CD4-positive, alpha-beta memory T cell (primary cell): ENCODE measurements at regions of chr11 and their contacts with region 1.

Region 1: GRCh38 chr11:6603287-6604080 is at the starts of genes ILK and RRP8:
- DNase-seq: peak; percentile 82 to 86 (median 85)
- H3K4me3 ChIP-seq: peak within 1 kb of the TSS; percentile 94 to 96
- H3K4me3 Mint-ChIP-seq: no peak within 1 kb of the TSS
- H3K27ac ChIP-seq: peak within 1 kb of the TSS; percentile 85
- H3K27ac Mint-ChIP-seq: no peak within 1 kb of the TSS
- H3K4me1 ChIP-seq: peaks cover 62% of the 10 kb centered on the region
- H3K4me1 Mint-ChIP-seq: peaks cover 10 to 34% (median 20%) of the 10 kb centered on the region in 4 donors
- H3K27me3 ChIP-seq: no peaks in the 10 kb centered on the region
- H3K27me3 Mint-ChIP-seq: no peaks in the 10 kb centered on the region
- total RNA-seq, gene ILK: 131 to 132 TPM
- total RNA-seq, gene RRP8: 29.9 to 36.0 TPM

Region 2: DNA sequence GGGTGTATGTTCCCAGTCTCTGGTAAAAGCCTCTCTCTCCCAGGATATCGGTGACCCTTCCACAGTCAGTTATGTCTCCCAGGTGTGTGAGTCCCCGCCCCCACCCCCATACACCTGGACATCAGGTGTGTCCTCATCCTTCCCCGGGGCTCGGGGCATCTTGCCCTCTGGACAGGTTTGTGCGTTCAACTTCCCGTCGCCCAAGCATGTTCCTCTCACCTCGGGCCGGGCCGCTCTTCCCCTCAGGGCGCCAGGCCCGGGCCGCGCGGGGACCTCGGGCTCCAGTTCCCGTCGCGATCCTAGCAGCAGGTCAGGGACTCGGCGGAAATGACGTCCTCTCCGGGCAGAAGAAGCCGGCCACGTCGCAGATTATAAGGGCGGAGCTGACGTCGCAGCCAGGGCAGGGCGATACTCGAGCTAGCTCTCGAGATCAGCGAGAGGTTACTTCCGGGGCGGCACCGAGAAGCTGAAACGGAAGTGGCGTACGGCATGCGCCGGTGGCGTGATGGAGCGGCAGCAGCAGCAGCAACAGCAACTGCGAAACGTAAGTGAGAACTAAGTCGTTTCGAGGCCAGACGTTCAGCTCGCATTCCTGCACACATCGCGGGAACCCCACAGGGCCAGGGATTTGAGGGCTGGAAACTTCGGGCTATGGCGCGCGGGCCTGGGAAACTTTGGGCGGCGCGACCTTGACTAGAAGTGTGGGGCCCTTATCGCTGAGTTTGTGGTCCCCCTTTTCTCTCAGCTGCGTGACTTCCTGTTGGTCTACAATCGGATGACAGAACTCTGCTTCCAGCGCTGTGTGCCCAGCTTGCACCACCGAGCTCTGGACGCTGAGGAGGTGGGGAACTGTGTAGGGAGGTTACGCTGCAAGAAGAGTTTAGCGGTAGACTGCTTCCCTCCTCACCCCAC is 122.2 kb before region 1 on chr11 and contains the starts of genes ARFIP2 and TIMM10B:
- CTCF ChIA-PET with region 1: interaction called, 4 read pairs
- POLR2A ChIA-PET with region 1: interaction called, 3 read pairs
- intact Hi-C with region 1: loop called (anchors 1 kb)
- DNase-seq: peak; percentile 93 to 98 (median 95)
- H3K4me3 ChIP-seq: peak within 1 kb of the TSS; percentile 83 to 97
- H3K4me3 Mint-ChIP-seq: peak within 1 kb of the TSS; percentile 93 to 98 (median 96)
- H3K27ac ChIP-seq: peak within 1 kb of the TSS; percentile 90
- H3K27ac Mint-ChIP-seq: peak within 1 kb of the TSS; percentile 95 to 99 (median 98)
- H3K4me1 ChIP-seq: peaks cover 46% of the 10 kb centered on the region
- H3K4me1 Mint-ChIP-seq: peaks cover 26 to 44% (median 36%) of the 10 kb centered on the region in 4 donors
- H3K27me3 ChIP-seq: no peaks in the 10 kb centered on the region
- H3K27me3 Mint-ChIP-seq: no peaks in the 10 kb centered on the region
- total RNA-seq, gene ARFIP2: 53.9 to 56.9 TPM
- total RNA-seq, gene TIMM10B: 54.7 to 60.3 TPM

Region 3: GRCh38 chr11:6498121-6498520 is 105.4 kb before region 1 on chr11:
- CTCF ChIA-PET with region 1: no interaction called
- POLR2A ChIA-PET with region 1: no interaction called
- intact Hi-C with region 1: no loop called
- DNase-seq: no peak
- H3K4me3 ChIP-seq: no peak overlapping the region
- H3K4me3 Mint-ChIP-seq: no peak overlapping the region
- H3K27ac ChIP-seq: no peak overlapping the region
- H3K27ac Mint-ChIP-seq: no peak overlapping the region
- H3K4me1 ChIP-seq: no peaks in the 10 kb centered on the region
- H3K4me1 Mint-ChIP-seq: peaks cover 0 to 3% (median under 1%) of the 10 kb centered on the region in 4 donors
- H3K27me3 ChIP-seq: no peaks in the 10 kb centered on the region
- H3K27me3 Mint-ChIP-seq: no peaks in the 10 kb centered on the region

Region 4: DNA sequence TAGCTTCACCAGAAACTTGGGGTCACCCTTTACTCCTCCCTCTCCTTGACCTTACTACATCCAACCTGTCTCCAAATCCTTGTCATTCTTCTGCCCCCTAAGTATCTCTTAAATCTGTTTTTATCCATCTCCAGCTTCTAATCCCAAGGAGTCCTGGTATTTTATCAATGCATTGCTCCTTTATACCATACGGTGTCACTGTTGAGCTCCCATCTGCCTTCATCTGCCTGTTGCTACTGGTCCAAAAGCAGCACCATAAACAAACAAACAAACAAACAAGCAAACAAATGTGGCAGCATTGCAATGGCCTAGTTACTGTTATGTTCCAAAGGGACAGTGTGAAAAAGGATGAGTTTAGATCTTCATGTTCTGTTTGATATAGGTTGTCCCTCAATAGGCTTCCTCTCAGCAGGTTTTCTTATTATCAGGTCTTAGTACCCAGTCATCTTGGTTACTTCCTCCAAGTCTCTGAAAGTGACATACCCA is 72.2 kb before region 1 on chr11:
- CTCF ChIA-PET with region 1: interaction called, 8 read pairs
- POLR2A ChIA-PET with region 1: no interaction called
- intact Hi-C with region 1: loop called (anchors 5 kb)
- DNase-seq: peak; percentile 46 to 54 (median 50)
- H3K4me3 ChIP-seq: no peak overlapping the region
- H3K4me3 Mint-ChIP-seq: no peak overlapping the region
- H3K27ac ChIP-seq: no peak overlapping the region
- H3K27ac Mint-ChIP-seq: no peak overlapping the region
- H3K4me1 ChIP-seq: peaks cover 7% of the 10 kb centered on the region
- H3K4me1 Mint-ChIP-seq: peaks cover 6 to 14% (median 8%) of the 10 kb centered on the region in 4 donors
- H3K27me3 ChIP-seq: no peaks in the 10 kb centered on the region
- H3K27me3 Mint-ChIP-seq: no peaks in the 10 kb centered on the region

Region 5: GRCh38 chr11:6586434-6587359 is 16.8 kb before region 1 on chr11:
- CTCF ChIA-PET with region 1: no interaction called
- POLR2A ChIA-PET with region 1: no interaction called
- intact Hi-C with region 1: no loop called
- DNase-seq: no peak
- H3K4me3 ChIP-seq: no peak overlapping the region
- H3K4me3 Mint-ChIP-seq: no peak overlapping the region
- H3K27ac ChIP-seq: no peak overlapping the region
- H3K27ac Mint-ChIP-seq: no peak overlapping the region
- H3K4me1 ChIP-seq: no peaks in the 10 kb centered on the region
- H3K4me1 Mint-ChIP-seq: peaks cover 0 to 2% (median 0%) of the 10 kb centered on the region in 4 donors
- H3K27me3 ChIP-seq: no peaks in the 10 kb centered on the region
- H3K27me3 Mint-ChIP-seq: no peaks in the 10 kb centered on the region

Region 6: DNA sequence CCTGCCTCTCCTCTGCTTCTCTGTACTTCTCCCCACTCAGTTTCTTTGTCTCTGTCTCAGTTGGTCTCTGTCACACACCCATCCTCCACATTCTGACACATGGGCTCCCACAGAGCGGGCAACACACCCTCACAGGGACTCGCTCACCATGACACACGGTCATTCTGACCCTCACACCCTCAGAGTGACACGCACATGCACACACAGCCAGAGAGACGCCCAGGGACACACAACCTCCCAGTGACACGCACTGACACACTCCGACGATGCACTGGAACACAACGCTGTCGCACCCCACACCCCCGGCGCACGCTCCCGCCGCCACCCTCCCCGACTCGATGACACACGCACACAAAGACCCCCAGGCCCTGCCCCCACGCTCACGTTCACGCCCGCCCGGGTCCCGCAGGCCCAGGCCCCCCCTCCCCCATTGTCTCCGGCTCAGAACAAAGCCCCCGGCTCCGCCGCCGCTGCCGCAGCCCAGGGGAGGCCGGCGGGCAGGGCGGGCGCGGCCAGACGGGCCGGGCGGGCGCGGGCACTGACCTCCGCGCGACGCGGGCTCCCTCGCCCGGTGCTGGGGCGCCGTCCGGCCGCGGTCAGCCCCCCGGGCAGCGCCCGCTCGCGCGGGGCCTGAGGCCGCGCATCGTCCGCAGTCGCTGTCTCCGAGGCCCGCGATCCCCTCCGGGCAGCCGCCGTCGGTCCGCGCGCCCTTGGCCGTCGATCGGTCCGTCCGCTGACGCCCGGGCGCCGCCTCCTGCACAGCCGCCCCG is 51.7 kb after region 1 on chr11:
- CTCF ChIA-PET with region 1: interaction called, 9 read pairs
- POLR2A ChIA-PET with region 1: interaction called, 10 read pairs
- intact Hi-C with region 1: no loop called
- DNase-seq: peak in 1 of 5 donors; percentile 50
- H3K4me3 ChIP-seq: peak overlapping the region in 1 of 2 donors; percentile 3
- H3K4me3 Mint-ChIP-seq: no peak overlapping the region
- H3K27ac ChIP-seq: no peak overlapping the region
- H3K27ac Mint-ChIP-seq: no peak overlapping the region
- H3K4me1 ChIP-seq: peaks cover 25% of the 10 kb centered on the region
- H3K4me1 Mint-ChIP-seq: peaks cover 0 to 8% (median 1%) of the 10 kb centered on the region in 4 donors
- H3K27me3 ChIP-seq: peaks cover 7% of the 10 kb centered on the region
- H3K27me3 Mint-ChIP-seq: peaks cover 0 to 2% of the 10 kb centered on the region in 2 donors

Region 7: DNA sequence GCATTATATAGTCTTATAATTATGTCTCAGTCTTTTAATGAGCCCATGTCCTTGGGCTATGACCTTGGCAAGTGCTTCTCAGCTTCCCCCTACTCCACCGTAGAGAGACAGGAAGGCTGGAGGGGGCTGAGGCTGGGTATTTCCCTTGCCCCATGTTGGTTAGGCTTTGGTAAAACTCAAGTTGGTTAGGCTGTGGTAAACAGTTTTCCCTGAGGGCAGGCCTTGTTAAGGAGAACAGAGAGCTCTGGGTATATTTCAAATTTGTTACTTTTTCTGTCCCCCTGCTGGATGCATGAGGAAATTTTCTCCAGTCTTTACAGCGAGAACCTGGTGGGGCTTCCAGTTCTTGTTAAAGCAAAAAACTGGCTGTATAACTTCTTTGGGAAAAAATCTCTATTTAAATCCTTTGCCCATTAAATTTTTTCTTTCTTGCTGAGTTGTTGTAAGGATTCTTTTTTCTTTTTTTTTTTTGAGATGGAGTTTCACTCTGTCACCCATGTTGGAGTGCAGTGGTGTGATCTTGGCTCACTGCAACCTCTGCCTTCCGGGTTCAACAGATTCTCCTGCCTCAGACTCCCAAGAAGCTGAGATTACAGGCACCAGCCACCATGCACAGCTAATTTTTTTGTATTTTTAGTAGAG is 64.4 kb after region 1 on chr11:
- CTCF ChIA-PET with region 1: interaction called, 35 read pairs
- POLR2A ChIA-PET with region 1: interaction called, 21 read pairs
- intact Hi-C with region 1: loop called (anchors 1 kb)
- DNase-seq: peak; percentile 48 to 78 (median 54)
- H3K4me3 ChIP-seq: no peak overlapping the region
- H3K4me3 Mint-ChIP-seq: peak overlapping the region in 7 of 8 donors; percentile 5 to 35 (median 16)
- H3K27ac ChIP-seq: no peak overlapping the region
- H3K27ac Mint-ChIP-seq: peak overlapping the region; percentile 11 to 88 (median 74)
- H3K4me1 ChIP-seq: peaks cover 59% of the 10 kb centered on the region
- H3K4me1 Mint-ChIP-seq: peaks cover 45 to 87% (median 54%) of the 10 kb centered on the region in 4 donors
- H3K27me3 ChIP-seq: no peaks in the 10 kb centered on the region
- H3K27me3 Mint-ChIP-seq: no peaks in the 10 kb centered on the region

Region 8: GRCh38 chr11:6674862-6675261 is 71.4 kb after region 1 on chr11:
- CTCF ChIA-PET with region 1: interaction called, 23 read pairs
- POLR2A ChIA-PET with region 1: interaction called, 172 read pairs
- intact Hi-C with region 1: no loop called
- DNase-seq: no peak
- H3K4me3 ChIP-seq: no peak overlapping the region
- H3K4me3 Mint-ChIP-seq: peak overlapping the region in 2 of 8 donors; percentile 26 to 82
- H3K27ac ChIP-seq: no peak overlapping the region
- H3K27ac Mint-ChIP-seq: peak overlapping the region in 1 of 7 donors; percentile 5
- H3K4me1 ChIP-seq: peaks cover 53% of the 10 kb centered on the region
- H3K4me1 Mint-ChIP-seq: peaks cover 43 to 70% (median 55%) of the 10 kb centered on the region in 4 donors
- H3K27me3 ChIP-seq: no peaks in the 10 kb centered on the region
- H3K27me3 Mint-ChIP-seq: no peaks in the 10 kb centered on the region

Region 9: DNA sequence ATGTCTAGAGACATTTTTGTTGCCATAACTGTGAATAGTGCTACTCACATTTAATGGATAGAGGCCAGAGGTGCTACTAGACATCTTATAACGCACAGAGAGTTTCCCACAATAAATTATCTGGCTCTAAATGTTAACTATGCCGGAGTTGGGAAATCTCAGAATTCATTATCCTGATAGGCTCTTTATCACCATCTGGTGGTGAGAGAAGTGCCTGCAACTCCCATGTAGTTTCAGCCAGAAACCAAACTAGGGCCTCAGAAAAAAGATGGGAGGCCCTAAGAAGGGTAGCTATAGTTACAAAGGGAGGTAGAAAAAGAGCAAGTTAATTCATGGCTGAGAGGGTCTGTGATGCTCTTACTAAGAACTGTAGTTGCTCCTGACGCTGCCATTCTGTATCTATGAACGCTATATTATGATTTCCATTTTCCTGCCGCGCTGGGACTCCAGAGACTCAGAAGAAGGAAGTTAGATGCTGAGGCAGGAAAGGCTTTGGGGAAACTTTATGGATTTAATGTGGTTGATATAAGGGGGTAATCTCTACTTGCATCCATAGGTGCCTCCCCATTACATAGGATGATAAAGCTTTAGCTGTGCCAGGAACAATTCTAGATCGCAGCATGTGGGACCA is 102.5 kb after region 1 on chr11:
- CTCF ChIA-PET with region 1: interaction called, 12 read pairs
- POLR2A ChIA-PET with region 1: interaction called, 6 read pairs
- intact Hi-C with region 1: loop called (anchors 1 kb)
- DNase-seq: peak; percentile 38 to 52 (median 46)
- H3K4me3 ChIP-seq: no peak overlapping the region
- H3K4me3 Mint-ChIP-seq: no peak overlapping the region
- H3K27ac ChIP-seq: no peak overlapping the region
- H3K27ac Mint-ChIP-seq: peak overlapping the region; percentile 4 to 84 (median 43)
- H3K4me1 ChIP-seq: no peaks in the 10 kb centered on the region
- H3K4me1 Mint-ChIP-seq: peaks cover 9 to 25% (median 18%) of the 10 kb centered on the region in 4 donors
- H3K27me3 ChIP-seq: no peaks in the 10 kb centered on the region
- H3K27me3 Mint-ChIP-seq: no peaks in the 10 kb centered on the region